GM12878 (cell line): ENCODE measurements at regions of chr11 and their contacts with region 1.

Region 1: DNA sequence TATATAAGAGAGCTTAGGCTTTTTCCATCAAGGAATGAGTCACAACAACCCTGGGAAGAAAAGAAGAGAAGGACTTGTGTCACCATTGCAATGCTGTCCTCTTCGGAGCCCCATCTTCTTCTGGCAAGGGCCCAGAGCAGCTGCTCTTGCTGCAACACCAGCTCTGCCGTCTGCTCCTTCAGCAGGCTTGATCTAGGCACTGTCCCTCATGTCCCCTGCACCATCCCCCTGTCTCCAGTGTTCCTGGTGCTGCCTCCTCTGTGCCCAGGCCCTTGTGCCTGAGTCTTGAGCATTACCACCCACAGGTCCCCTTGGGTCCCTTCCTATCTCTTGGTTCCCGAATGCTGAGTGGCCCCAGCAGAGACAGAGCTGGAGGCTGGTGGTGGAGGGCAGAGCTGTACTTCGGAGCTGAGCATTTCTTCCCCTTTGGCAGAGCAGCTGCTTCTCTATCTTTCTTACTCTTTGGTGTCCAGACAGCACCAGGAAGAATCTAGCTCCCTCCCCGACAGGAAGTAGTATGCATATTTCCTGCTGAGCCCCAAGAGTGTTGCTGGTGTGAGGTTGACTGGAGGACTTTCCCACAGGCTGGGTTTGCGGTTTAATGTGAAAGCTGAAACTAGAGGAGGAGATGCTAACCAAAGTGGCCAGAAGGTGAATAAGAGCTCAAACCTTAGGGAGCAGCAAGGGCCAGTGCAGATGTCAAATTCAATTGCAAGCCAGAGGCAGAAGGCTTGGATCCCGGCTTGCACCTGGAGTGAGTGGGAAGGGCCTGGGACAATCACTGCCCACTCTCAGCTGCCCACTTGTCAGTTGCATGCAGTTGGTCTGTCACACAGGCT is 27.8 kb downstream of the WEE1 start:
- DNase-seq: peak; percentile 95
- ATAC-seq: peak; percentile 90
- H3K4me3 ChIP-seq: peak overlapping the region; percentile 64
- H3K27ac ChIP-seq: peak overlapping the region; percentile 87
- H3K4me1 ChIP-seq: peaks cover 40% of the 10 kb centered on the region
- H3K27me3 ChIP-seq: no peaks in the 10 kb centered on the region
- CTCF ChIP-seq: no peak
- EP300 ChIP-seq: peak in 1 of 2 experiments; percentile 60; a peak in 2 of 4 replicates
- POLR2A ChIP-seq: peak; percentile 30; the same call in 1 of the 2 replicates
- RAD21 ChIP-seq: no peak

Region 2: DNA sequence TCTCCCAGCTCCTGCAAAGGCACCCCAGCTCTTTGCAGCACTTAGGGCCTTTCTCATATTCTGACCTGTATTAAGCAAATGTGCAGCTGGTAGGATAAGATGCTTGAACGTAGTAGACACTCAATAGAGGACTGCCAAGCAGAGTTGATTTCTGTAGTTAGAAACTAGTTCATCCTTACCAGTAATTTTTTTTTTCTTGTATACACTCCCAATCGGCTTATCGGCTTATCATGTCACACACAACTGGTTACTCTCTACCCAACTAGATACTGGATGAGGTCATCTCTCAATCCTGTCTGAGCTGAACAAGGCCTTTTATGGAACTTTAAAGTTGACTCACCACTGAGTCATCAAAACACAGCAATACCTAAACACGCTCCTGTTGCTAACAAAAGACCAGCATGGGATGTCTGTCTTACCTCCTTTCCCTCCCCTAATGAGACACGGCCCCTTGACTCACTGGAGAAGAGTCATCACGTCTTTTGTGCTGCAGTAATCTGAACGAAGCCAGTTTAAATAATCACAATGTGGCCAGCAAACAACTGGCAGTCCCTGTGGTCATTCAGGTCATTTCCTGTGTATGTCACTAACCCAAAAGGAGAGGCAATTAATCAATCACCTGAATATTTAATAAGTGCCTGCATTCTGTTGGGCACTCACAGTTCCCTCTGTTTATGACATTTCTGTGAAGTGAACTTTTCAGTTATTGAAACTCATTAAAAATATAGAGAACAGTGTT is 35.3 kb before region 1 on chr11:
- CTCF ChIA-PET with region 1: interaction called, 4 read pairs
- POLR2A ChIA-PET with region 1: interaction called, 10 read pairs
- RAD21 ChIA-PET with region 1: interaction called, 10 read pairs
- SMC1A ChIA-PET with region 1: interaction called, 6 read pairs
- in situ Hi-C with region 1: no loop called
- intact Hi-C with region 1: no loop called
- DNase-seq: peak; percentile 84
- ATAC-seq: peak; percentile 93
- H3K4me3 ChIP-seq: peak overlapping the region; percentile 17; the same call in 1 of the 2 replicates
- H3K27ac ChIP-seq: peak overlapping the region; percentile 54
- H3K4me1 ChIP-seq: peaks cover 21% of the 10 kb centered on the region
- H3K27me3 ChIP-seq: no peaks in the 10 kb centered on the region
- CTCF ChIP-seq: no peak
- EP300 ChIP-seq: peak; percentile 77 to 80; a peak in 3 of 4 replicates
- POLR2A ChIP-seq: no peak
- RAD21 ChIP-seq: no peak

Region 3: DNA sequence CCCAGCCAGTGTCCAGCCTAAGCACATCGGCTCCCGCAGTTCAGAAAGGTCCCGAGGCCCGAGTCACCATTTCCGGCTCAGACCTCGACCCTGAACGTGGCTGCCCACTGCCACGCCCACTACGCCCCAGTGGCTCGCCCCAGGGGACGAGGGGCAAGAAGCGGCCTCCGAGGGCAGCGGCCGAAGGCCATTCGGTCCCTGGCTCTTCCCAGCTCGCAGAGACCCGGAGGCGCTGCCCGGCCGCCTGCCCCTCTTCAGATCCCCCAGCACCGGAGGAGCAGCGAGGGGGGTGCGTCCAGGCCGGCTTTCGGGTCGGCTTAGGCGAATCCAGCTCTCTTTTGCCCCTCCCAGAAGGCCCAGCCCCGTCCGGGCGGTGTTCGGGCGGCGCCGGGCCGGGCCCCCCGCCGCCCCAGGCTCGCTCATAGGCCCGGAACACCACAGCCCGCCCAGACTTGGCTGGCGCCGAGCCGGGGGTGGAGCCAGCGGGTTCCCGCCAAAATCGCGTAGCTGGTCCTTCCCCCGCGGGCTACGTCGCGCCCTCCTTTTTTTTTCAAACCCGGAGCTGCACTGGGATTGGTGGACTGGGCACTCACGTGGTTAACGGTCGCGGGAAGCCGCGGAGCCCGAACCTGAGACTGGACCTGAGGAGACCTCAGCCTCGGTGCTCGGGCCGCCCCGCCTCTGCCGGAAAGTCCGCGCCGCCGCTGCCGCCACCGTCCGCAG is 28.0 kb before region 1 on chr11 and contains the start of gene WEE1:
- CTCF ChIA-PET with region 1: interaction called, 24 read pairs
- POLR2A ChIA-PET with region 1: interaction called, 19 read pairs
- RAD21 ChIA-PET with region 1: interaction called, 46 read pairs
- SMC1A ChIA-PET with region 1: interaction called, 64 read pairs
- in situ Hi-C with region 1: no loop called
- intact Hi-C with region 1: no loop called
- DNase-seq: peak; percentile 86
- ATAC-seq: peak; percentile 94
- H3K4me3 ChIP-seq: peak within 1 kb of the TSS; percentile 90
- H3K27ac ChIP-seq: peak within 1 kb of the TSS; percentile 90
- H3K4me1 ChIP-seq: peaks cover 6% of the 10 kb centered on the region; the same call in 1 of the 2 replicates
- H3K27me3 ChIP-seq: no peaks in the 10 kb centered on the region
- CTCF ChIP-seq: no peak
- EP300 ChIP-seq: no peak
- POLR2A ChIP-seq: peak; percentile 84
- RAD21 ChIP-seq: no peak
- polyA plus RNA-seq, gene WEE1: 20.6 to 22.2 TPM

Region 4: DNA sequence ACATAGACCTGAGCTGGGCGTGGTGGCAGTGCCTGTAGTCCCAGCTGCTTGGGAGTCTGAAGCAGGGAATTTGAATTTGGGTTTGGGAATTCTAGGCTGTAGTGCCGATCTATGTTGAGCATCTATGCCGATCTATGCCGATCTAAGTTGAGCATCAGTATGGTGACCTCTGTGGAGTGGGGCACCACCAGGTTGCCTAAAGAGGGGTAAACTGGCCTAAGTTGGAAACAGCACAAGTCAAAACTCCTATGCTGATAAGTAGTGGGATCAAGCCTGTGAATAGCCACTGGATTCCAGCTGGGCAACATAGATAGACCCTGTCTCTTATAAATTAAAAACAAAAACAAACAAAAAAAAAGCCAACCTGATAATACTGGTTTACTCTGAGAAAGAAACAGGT is 20.4 kb before region 1 on chr11:
- CTCF ChIA-PET with region 1: interaction called, 24 read pairs
- POLR2A ChIA-PET with region 1: interaction called, 19 read pairs
- RAD21 ChIA-PET with region 1: interaction called, 46 read pairs
- SMC1A ChIA-PET with region 1: interaction called, 64 read pairs
- in situ Hi-C with region 1: no loop called
- intact Hi-C with region 1: no loop called
- DNase-seq: no peak
- ATAC-seq: no peak
- H3K4me3 ChIP-seq: no peak overlapping the region
- H3K27ac ChIP-seq: no peak overlapping the region
- H3K4me1 ChIP-seq: no peaks in the 10 kb centered on the region
- H3K27me3 ChIP-seq: no peaks in the 10 kb centered on the region
- CTCF ChIP-seq: no peak
- EP300 ChIP-seq: no peak
- POLR2A ChIP-seq: no peak
- RAD21 ChIP-seq: no peak

Region 5: DNA sequence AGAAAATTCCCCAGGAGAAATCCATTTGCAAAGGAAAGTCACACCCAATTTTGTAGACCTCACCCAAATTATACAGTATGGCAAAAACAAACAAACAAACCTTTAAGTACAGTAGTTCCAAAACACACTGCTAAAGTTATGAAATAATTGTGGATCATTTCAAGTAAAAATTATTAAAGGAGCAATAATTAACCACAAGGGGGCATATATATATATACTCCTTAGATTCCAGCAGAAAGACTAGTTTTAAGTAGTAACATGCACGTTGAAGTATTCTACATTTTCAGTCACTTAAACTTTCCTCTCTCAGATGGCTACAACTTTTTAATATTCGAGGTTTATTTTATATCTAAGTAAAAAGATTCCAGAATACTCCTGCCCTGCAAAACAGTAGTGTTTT is 913.0 kb after region 1 on chr11:
- CTCF ChIA-PET with region 1: no interaction called
- POLR2A ChIA-PET with region 1: no interaction called
- RAD21 ChIA-PET with region 1: no interaction called
- SMC1A ChIA-PET with region 1: no interaction called
- in situ Hi-C with region 1: no loop called
- intact Hi-C with region 1: no loop called
- DNase-seq: no peak
- ATAC-seq: no peak
- H3K4me3 ChIP-seq: no peak overlapping the region
- H3K27ac ChIP-seq: no peak overlapping the region
- H3K4me1 ChIP-seq: no peaks in the 10 kb centered on the region
- H3K27me3 ChIP-seq: no peaks in the 10 kb centered on the region
- CTCF ChIP-seq: no peak; a peak in 1 of 6 replicates
- EP300 ChIP-seq: no peak
- POLR2A ChIP-seq: no peak
- RAD21 ChIP-seq: no peak